Upper lobe of right lung (tissue), 1 donor: ENCODE measurements at regions of chr14 and their contacts with region 1.

Region 1: DNA sequence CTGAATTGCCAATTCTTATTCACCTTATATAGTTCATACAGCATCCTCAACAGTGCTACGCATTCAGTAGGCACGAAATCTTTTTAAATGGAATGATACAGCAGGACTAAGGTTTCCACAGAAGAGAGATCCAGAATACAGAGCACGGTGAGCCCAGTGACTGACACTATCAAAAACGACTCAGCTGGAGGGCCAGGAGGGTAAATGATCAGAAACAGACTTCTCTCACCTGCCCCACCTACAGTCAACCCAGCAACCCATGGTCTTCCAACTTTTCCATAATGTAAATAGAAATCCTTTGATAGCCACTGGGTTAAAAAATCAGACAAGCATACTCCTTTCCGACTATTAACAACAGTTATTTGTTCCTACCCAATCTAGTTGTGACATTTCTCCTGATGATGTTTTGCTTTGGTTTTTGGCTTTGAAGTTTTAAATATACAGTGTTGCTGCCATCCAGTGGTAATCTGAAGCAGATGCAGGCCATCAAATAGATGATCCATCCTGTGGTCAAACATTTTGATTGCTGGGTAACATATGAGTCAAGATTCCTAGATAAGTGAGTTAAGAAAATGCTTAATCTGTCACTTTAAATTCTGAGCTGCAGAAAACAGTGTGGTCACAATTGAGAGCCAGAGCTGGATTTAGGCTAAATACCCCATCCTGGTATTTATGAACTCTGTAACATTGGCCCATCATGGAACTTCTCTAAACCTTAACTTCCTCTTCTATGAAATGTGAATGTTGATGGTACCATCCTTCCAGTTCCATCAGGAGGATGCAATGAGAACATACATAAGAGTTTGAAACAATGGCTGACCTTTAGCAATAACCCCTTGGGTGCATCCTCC is 42.0 kb downstream of the GPHB5 start:
- DNase-seq: no peak
- ATAC-seq: peak; percentile 58
- H3K4me3 ChIP-seq: no peak overlapping the region
- H3K27ac ChIP-seq: no peak overlapping the region
- H3K4me1 ChIP-seq: peaks cover 7% of the 10 kb centered on the region
- H3K27me3 ChIP-seq: no peaks in the 10 kb centered on the region
- CTCF ChIP-seq: peak; percentile 76

Region 2: DNA sequence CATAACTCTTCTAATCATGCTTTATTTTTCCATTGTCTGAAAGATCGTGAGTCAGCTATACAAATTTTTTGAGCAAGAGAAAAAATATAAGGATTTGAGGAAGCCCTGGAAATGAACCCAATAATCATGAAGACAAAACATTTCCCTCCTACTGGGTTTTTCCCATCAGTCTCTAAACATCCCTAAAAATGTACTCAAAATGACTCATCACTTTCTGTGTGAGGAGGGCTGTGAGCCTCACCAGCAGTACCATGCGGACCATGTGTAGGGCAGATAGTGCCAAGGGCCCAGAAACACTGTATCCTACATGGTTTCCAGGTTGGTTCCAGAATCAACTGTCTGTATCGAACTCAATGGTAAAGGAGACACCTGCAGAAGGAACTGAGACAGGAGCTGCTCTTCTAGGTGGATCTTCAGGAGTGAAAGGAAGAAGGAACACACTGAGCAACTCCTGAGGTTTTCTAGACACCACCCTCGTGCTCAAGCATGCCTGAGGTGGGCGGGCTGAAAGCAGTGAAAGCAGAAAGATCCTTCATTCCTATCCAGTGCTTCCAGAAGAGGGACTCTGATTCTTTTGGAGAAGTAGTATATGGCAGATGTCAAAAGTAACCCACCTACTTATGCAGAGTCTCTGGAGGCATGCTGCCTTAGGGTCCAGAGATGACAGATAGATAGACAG is 121.1 kb before region 1 on chr14:
- intact Hi-C with region 1: no loop called
- DNase-seq: no peak
- ATAC-seq: no peak
- H3K4me3 ChIP-seq: no peak overlapping the region
- H3K27ac ChIP-seq: no peak overlapping the region
- H3K4me1 ChIP-seq: no peaks in the 10 kb centered on the region
- H3K27me3 ChIP-seq: no peaks in the 10 kb centered on the region
- CTCF ChIP-seq: no peak

Region 3: DNA sequence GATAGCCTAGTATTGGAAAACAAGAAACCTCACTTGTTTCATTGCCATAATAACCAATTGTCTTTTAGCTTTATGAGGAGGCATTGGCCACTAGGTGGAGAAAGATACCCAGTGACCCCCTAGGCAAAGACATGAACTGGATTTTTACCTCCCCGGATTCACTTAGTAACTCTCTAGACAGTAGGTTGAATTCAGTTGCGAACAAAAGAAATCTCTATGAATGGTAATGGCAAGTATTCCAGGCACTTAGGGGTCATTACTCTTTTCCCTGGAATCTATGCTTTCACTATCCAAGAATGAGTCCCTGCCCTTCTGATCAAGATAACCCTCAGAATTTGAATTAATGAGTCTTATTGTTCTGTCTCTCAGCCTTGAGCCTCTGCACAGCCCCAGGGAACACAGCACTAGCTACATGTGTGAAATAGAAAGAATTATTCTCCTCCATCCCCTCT is 101.9 kb before region 1 on chr14:
- intact Hi-C with region 1: loop called (anchors 5 kb)
- DNase-seq: no peak
- ATAC-seq: no peak
- H3K4me3 ChIP-seq: no peak overlapping the region
- H3K27ac ChIP-seq: no peak overlapping the region
- H3K4me1 ChIP-seq: no peaks in the 10 kb centered on the region
- H3K27me3 ChIP-seq: no peaks in the 10 kb centered on the region
- CTCF ChIP-seq: peak; percentile 55

Region 4: GRCh38 chr14:63257299-63257698 is 19.4 kb before region 1 on chr14:
- intact Hi-C with region 1: no loop called
- DNase-seq: no peak
- ATAC-seq: no peak
- H3K4me3 ChIP-seq: no peak overlapping the region
- H3K27ac ChIP-seq: no peak overlapping the region
- H3K4me1 ChIP-seq: no peaks in the 10 kb centered on the region
- H3K27me3 ChIP-seq: no peaks in the 10 kb centered on the region
- CTCF ChIP-seq: no peak